PC-9 (cell line): ENCODE measurements at regions of chr5 and their contacts with region 1.

Region 1: DNA sequence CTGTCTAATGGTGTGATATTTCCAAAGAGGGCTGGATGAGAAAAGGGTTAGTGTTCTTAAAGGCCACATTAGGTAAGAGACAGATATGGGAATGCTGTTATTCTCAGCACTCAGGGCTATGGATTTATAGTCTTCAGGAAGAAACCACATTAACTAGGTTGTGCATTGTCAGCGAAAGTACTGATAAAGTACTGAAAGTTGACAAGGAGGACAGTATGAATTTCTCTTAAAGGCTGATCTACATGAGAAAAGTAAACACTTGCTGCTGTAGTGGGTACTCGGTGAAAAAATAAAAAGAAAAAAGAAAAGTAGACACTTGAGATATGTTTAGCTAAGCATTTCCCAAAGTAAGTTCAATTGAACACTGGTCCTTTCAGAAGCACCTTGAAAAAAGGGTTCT is 381.0 kb upstream of the RPS23 start:
- DNase-seq: no peak
- H3K4me3 ChIP-seq: no peak overlapping the region
- H3K27ac ChIP-seq: no peak overlapping the region
- H3K4me1 ChIP-seq: no peaks in the 10 kb centered on the region
- H3K27me3 ChIP-seq: no peaks in the 10 kb centered on the region
- CTCF ChIP-seq: no peak

Region 2: GRCh38 chr5:82058710-82059109 is 600.4 kb before region 1 on chr5:
- CTCF ChIA-PET with region 1: no interaction called
- POLR2A ChIA-PET with region 1: interaction called, 12 read pairs
- intact Hi-C with region 1: no loop called
- DNase-seq: no peak
- H3K4me3 ChIP-seq: no peak overlapping the region
- H3K27ac ChIP-seq: no peak overlapping the region
- H3K4me1 ChIP-seq: no peaks in the 10 kb centered on the region
- H3K27me3 ChIP-seq: no peaks in the 10 kb centered on the region
- CTCF ChIP-seq: no peak

Region 3: GRCh38 chr5:82605441-82605973 is 53.6 kb before region 1 on chr5:
- CTCF ChIA-PET with region 1: no interaction called
- POLR2A ChIA-PET with region 1: no interaction called
- intact Hi-C with region 1: no loop called
- DNase-seq: no peak
- H3K4me3 ChIP-seq: no peak overlapping the region
- H3K27ac ChIP-seq: no peak overlapping the region
- H3K4me1 ChIP-seq: no peaks in the 10 kb centered on the region
- H3K27me3 ChIP-seq: no peaks in the 10 kb centered on the region
- CTCF ChIP-seq: no peak

Region 4: GRCh38 chr5:82917584-82917983 is 258.5 kb after region 1 on chr5:
- CTCF ChIA-PET with region 1: no interaction called
- POLR2A ChIA-PET with region 1: no interaction called
- intact Hi-C with region 1: no loop called
- DNase-seq: no peak
- H3K4me3 ChIP-seq: no peak overlapping the region
- H3K27ac ChIP-seq: no peak overlapping the region
- H3K4me1 ChIP-seq: no peaks in the 10 kb centered on the region
- H3K27me3 ChIP-seq: no peaks in the 10 kb centered on the region
- CTCF ChIP-seq: no peak

Region 5: DNA sequence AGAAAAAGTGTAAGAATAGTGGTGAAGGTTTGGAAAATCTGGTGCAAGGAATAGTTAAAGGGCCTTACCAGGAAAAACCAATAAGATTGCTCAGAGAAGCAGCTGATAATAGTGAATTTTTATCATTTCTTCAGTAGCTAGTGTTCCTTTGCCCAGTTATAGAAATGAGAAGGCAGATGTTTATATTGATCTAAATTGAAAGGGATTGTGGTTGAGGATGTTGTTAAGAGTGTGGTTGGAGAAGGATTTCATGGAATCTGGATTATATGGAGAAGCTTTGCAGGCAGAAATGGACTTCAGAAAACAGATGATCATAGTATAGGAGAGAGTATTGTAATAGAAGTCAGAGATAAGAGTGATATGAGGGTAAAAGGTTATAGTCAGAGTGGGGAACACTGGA is 520.9 kb after region 1 on chr5:
- CTCF ChIA-PET with region 1: no interaction called
- POLR2A ChIA-PET with region 1: no interaction called
- intact Hi-C with region 1: no loop called
- DNase-seq: no peak
- H3K4me3 ChIP-seq: no peak overlapping the region
- H3K27ac ChIP-seq: no peak overlapping the region
- H3K4me1 ChIP-seq: no peaks in the 10 kb centered on the region
- H3K27me3 ChIP-seq: no peaks in the 10 kb centered on the region
- CTCF ChIP-seq: no peak